CD4-positive, alpha-beta memory T cell (primary cell): ENCODE measurements at regions of chr2 and their contacts with region 1.

Region 1: DNA sequence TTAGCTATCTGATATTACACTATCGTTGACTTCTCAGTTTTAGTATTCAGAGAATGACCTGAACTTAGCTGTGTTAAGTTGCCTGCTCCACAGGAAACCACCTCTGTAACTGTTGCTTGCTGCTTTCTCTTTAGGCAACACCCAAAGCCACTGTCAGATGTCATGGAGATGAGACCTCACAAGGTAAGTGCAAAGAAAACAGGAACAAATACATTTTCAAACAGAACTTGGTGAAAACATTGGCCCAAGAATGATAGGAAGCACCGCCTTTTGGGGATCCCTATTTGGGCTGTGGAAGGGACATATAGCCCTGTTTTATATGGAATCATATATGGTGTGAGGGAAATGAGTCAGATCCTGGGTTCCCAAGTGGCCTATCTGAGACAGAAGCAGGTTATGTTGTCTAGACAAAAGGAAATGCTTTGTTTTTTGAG is 143.4 kb downstream of the UBE2E3 start:
- DNase-seq: peak; percentile 78 to 89 (median 87)
- H3K4me3 ChIP-seq: peak overlapping the region in 1 of 2 donors; percentile 36
- H3K4me3 Mint-ChIP-seq: peak overlapping the region; percentile 76 to 90 (median 80)
- H3K27ac ChIP-seq: peak overlapping the region; percentile 78
- H3K27ac Mint-ChIP-seq: peak overlapping the region; percentile 96 to 99 (median 97)
- H3K4me1 ChIP-seq: peaks cover 83% of the 10 kb centered on the region
- H3K4me1 Mint-ChIP-seq: peaks cover 43 to 76% (median 50%) of the 10 kb centered on the region in 4 donors
- H3K27me3 ChIP-seq: no peaks in the 10 kb centered on the region
- H3K27me3 Mint-ChIP-seq: no peaks in the 10 kb centered on the region

Region 2: DNA sequence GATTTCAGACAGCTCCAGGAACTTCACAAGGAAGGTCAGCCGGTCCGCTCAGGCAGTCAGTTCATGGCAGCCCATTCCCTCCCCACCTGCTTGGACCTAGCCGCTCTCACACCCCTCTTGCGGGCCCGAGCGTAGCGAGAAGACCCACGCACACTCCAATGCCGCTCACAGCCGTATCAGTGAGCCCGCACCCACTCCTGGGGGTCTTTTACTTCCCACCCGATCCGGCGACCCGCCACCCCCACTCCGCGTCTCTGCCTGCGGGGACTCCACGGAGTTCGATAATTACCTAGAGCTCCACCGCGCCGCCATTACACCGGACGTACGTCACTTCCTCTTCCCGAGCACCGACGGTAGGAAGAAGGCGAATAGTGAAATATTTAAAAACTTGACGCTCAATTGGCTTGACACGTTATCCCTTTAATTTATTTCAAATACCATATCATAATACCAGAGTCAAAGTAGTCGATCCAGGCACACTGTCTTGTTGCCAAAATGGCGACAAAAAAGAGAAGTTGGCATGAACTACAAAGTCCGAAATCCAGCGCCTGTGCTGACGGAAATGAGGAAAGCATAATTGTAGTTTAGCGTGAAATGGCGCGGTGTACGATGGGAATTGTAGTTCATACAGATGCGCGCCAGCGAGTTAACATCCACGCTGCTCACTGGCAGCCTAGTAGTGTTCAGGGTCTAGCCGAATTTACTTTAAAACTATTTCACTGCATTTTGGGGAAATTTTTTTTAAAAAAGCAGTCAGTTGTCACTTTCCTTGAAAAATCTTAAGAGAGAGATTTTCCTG is 1116.8 kb before region 1 on chr2 and contains the start of gene CWC22:
- CTCF ChIA-PET with region 1: no interaction called
- POLR2A ChIA-PET with region 1: no interaction called
- intact Hi-C with region 1: loop called (anchors 5 kb)
- DNase-seq: peak; percentile 90 to 92 (median 91)
- H3K4me3 ChIP-seq: peak within 1 kb of the TSS; percentile 76 to 89
- H3K4me3 Mint-ChIP-seq: peak within 1 kb of the TSS; percentile 92 to 98 (median 94)
- H3K27ac ChIP-seq: peak within 1 kb of the TSS; percentile 96
- H3K27ac Mint-ChIP-seq: peak within 1 kb of the TSS; percentile 98 to 100 (median 100)
- H3K4me1 ChIP-seq: peaks cover 15% of the 10 kb centered on the region
- H3K4me1 Mint-ChIP-seq: peaks cover 22 to 48% (median 37%) of the 10 kb centered on the region in 4 donors
- H3K27me3 ChIP-seq: no peaks in the 10 kb centered on the region
- H3K27me3 Mint-ChIP-seq: no peaks in the 10 kb centered on the region
- total RNA-seq, gene CWC22: 28.9 to 31.1 TPM

Region 3: GRCh38 chr2:181152226-181152625 is 28.4 kb after region 1 on chr2:
- CTCF ChIA-PET with region 1: interaction called, 3 read pairs
- POLR2A ChIA-PET with region 1: interaction called, 296 read pairs
- intact Hi-C with region 1: no loop called
- DNase-seq: no peak
- H3K4me3 ChIP-seq: no peak overlapping the region
- H3K4me3 Mint-ChIP-seq: peak overlapping the region in 2 of 8 donors; percentile 29 to 80
- H3K27ac ChIP-seq: no peak overlapping the region
- H3K27ac Mint-ChIP-seq: peak overlapping the region in 5 of 7 donors; percentile 19 to 70 (median 51)
- H3K4me1 ChIP-seq: peaks cover 45% of the 10 kb centered on the region
- H3K4me1 Mint-ChIP-seq: peaks cover 19 to 36% (median 31%) of the 10 kb centered on the region in 4 donors
- H3K27me3 ChIP-seq: no peaks in the 10 kb centered on the region
- H3K27me3 Mint-ChIP-seq: no peaks in the 10 kb centered on the region

Region 4: GRCh38 chr2:181178823-181179412 is 55.1 kb after region 1 on chr2:
- CTCF ChIA-PET with region 1: interaction called, 3 read pairs
- POLR2A ChIA-PET with region 1: interaction called, 14 read pairs
- intact Hi-C with region 1: no loop called
- DNase-seq: peak in 4 of 5 donors; percentile 29 to 43 (median 37)
- H3K4me3 ChIP-seq: no peak overlapping the region
- H3K4me3 Mint-ChIP-seq: peak overlapping the region in 4 of 8 donors; percentile 19 to 41 (median 34)
- H3K27ac ChIP-seq: peak overlapping the region; percentile 1
- H3K27ac Mint-ChIP-seq: peak overlapping the region; percentile 12 to 90 (median 54)
- H3K4me1 ChIP-seq: peaks cover 52% of the 10 kb centered on the region
- H3K4me1 Mint-ChIP-seq: peaks cover 31 to 39% (median 36%) of the 10 kb centered on the region in 4 donors
- H3K27me3 ChIP-seq: no peaks in the 10 kb centered on the region
- H3K27me3 Mint-ChIP-seq: no peaks in the 10 kb centered on the region

Region 5: GRCh38 chr2:181312515-181312927 is 188.7 kb after region 1 on chr2:
- CTCF ChIA-PET with region 1: no interaction called
- POLR2A ChIA-PET with region 1: interaction called, 22 read pairs
- intact Hi-C with region 1: no loop called
- DNase-seq: peak; percentile 38 to 55 (median 45)
- H3K4me3 ChIP-seq: peak overlapping the region in 1 of 2 donors; percentile 27
- H3K4me3 Mint-ChIP-seq: peak overlapping the region; percentile 12 to 77 (median 71)
- H3K27ac ChIP-seq: peak overlapping the region; percentile 46
- H3K27ac Mint-ChIP-seq: peak overlapping the region; percentile 88 to 97 (median 95)
- H3K4me1 ChIP-seq: peaks cover 75% of the 10 kb centered on the region
- H3K4me1 Mint-ChIP-seq: peaks cover 34 to 56% (median 46%) of the 10 kb centered on the region in 4 donors
- H3K27me3 ChIP-seq: no peaks in the 10 kb centered on the region
- H3K27me3 Mint-ChIP-seq: no peaks in the 10 kb centered on the region